ENCODE measurements at regions of chr12 and their contacts with region 1.

Region 1: DNA sequence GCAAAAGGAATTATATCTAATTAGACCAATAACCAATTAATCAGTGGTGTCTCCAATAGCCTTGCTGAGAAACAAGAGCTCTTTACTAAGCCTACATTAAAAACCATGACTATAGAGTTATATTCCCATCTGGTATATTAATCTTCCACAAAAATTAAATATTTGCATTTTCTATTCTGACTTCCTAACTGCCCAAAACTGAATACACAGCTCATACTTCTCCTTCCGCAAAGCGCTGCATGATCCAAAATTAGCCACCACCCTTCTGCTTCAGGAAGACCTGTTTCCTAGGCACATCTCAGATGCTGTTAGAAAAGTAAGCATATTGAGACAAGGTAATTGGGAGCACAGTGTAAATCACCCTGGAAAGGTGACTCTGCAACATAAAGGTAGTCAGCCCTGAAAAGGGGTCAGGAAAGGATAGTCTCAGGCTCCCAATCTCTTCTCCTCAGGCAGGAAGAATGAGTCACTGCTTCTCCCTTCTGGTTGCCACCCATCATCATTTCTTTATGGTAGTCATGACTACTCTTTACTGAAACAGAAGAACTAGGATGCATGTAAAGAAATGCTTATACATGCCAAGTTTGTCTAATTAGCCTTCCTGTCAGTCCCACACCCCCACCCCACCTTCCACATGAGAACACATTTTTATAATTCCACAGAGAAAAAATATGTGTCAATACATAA is 54.3 kb downstream of the PLCZ1 start:
- DNase-seq: peak; percentile 77
- H3K4me3 ChIP-seq: no peak overlapping the region
- H3K27ac ChIP-seq: peak overlapping the region; percentile 77
- H3K4me1 ChIP-seq: peaks cover 12% of the 10 kb centered on the region
- H3K27me3 ChIP-seq: no peaks in the 10 kb centered on the region
- CTCF ChIP-seq: no peak

Region 2: DNA sequence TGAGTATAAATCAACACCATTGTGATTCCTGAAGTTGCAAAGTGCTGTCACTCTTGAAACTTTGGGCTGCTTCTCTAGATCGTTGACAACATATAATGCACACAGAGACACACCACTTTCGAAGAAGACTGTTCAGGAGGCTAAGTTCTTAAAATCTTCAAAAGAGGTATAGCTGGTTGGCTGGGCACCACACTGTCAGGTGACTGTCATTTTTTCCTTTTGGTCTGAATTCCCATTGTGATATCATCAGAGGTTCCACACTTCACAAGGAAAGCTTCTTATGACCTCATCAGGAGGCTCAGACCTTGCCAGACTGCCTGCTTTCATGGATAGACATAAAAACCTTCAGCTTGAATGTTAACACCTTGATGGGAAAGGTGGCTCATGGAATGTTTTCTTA is 54.3 kb after region 1 on chr12 and contains the starts of genes CAPZA3 and PLCZ1:
- CTCF ChIA-PET with region 1: no interaction called
- dilution Hi-C with region 1: loop called (anchors 5 kb)
- in situ Hi-C with region 1: no loop called
- intact Hi-C with region 1: no loop called
- DNase-seq: no peak
- H3K4me3 ChIP-seq: no peak within 1 kb of the TSS
- H3K27ac ChIP-seq: no peak within 1 kb of the TSS
- H3K4me1 ChIP-seq: no peaks in the 10 kb centered on the region
- H3K27me3 ChIP-seq: no peaks in the 10 kb centered on the region
- CTCF ChIP-seq: no peak
- total RNA-seq, gene CAPZA3: 0.17 TPM in 1 of 2 donors, not detected in the other
- total RNA-seq, gene PLCZ1: 0.67 to 3.0 TPM